Sigmoid colon (tissue), 7 donors: ENCODE measurements at regions of chr1 and their contacts with region 1.

Region 1: DNA sequence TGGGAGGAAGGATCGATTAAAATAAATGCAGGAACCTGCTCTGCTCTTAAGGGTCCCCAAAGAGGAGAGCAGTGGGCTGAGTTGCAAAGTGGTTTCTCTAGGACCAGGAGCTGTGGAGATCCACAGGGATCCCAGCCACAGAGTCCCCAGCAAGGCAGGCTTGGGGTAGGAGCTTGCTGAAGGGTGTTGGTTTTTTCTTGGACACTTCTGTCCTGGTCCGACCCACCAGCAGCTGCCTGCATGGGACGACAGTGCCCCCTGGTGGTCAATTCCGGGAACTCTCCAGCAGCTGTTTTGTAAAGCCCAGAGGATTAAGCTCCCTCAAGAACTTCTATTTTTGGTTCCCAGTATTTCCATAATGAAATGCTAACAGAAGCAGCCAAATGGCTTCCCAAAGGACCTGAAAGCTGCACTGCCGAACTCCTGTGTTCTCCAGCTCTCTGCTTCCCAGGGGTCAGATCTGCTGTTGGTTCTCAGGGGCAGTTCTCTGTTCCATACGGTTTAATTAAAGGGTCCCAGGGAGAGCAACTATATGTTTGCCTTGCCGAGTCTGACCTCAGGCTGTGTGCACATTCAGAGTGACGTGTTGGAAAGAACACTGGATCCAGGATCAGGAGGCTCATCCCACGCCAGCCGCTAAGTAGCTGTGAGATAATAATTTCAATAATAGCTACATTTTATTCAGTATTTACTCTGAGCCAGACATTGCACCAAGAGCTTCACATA is 23.2 kb downstream of the NENF start:
- DNase-seq: peak; percentile 92
- H3K4me3 ChIP-seq: no peak overlapping the region
- H3K27ac ChIP-seq: peak overlapping the region in 3 of 4 donors; percentile 35 to 73 (median 55)
- H3K4me1 ChIP-seq: peaks cover 0 to 21% (median 12%) of the 10 kb centered on the region in 4 donors
- H3K27me3 ChIP-seq: no peaks in the 10 kb centered on the region
- CTCF ChIP-seq: peak; percentile 84 to 99 (median 93)
- EP300 ChIP-seq: no peak
- POLR2A ChIP-seq: no peak

Region 2: GRCh38 chr1:211680752-211681327 is 775.1 kb before region 1 on chr1:
- intact Hi-C with region 1: loop called (anchors 2 kb)
- DNase-seq: peak; percentile 78
- H3K4me3 ChIP-seq: no peak overlapping the region
- H3K27ac ChIP-seq: no peak overlapping the region
- H3K4me1 ChIP-seq: peaks cover 0 to 3% (median 3%) of the 10 kb centered on the region in 4 donors
- H3K27me3 ChIP-seq: no peaks in the 10 kb centered on the region
- CTCF ChIP-seq: peak; percentile 55 to 70 (median 66)
- EP300 ChIP-seq: no peak
- POLR2A ChIP-seq: no peak

Region 3: DNA sequence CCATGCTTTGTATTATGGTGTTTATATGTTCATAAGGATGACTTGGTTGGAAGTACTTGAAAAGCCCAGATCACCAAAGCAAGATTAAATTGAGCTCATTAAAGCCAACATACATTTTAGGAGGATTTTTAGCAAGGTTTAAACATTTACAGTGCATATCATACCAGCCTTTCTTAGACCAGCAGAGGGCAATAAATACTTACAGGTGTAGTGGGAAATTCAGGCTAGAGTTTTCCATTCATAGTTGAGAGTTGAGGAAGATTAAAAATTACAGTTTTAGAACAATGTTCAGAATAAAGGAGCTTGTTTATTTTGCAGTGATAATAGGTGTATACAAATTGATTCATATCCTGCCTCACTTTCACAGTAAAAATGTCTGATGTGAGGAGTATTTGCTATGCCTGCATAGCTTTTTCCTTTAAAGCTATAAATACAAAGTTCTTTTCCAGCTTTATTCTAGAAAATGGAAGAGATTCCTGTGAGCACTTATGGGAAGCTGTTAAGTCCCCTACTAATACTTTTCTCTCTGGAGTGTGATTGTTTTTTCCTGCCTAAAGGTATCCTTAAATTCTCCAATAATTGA is 385.2 kb before region 1 on chr1:
- intact Hi-C with region 1: loop called (anchors 2 kb)
- DNase-seq: no peak
- H3K4me3 ChIP-seq: no peak overlapping the region
- H3K27ac ChIP-seq: no peak overlapping the region
- H3K4me1 ChIP-seq: no peaks in the 10 kb centered on the region
- H3K27me3 ChIP-seq: no peaks in the 10 kb centered on the region
- CTCF ChIP-seq: peak; percentile 61 to 79 (median 71)
- EP300 ChIP-seq: no peak
- POLR2A ChIP-seq: no peak

Region 4: GRCh38 chr1:212205843-212206242 is 250.1 kb before region 1 on chr1:
- intact Hi-C with region 1: no loop called
- DNase-seq: no peak
- H3K4me3 ChIP-seq: no peak overlapping the region
- H3K27ac ChIP-seq: no peak overlapping the region
- H3K4me1 ChIP-seq: no peaks in the 10 kb centered on the region
- H3K27me3 ChIP-seq: no peaks in the 10 kb centered on the region
- CTCF ChIP-seq: no peak
- EP300 ChIP-seq: no peak
- POLR2A ChIP-seq: no peak

Region 5: GRCh38 chr1:212368073-212368484 is 87.9 kb before region 1 on chr1:
- intact Hi-C with region 1: loop called (anchors 5 kb)
- DNase-seq: no peak
- H3K4me3 ChIP-seq: no peak overlapping the region
- H3K27ac ChIP-seq: no peak overlapping the region
- H3K4me1 ChIP-seq: peaks cover 0 to 3% (median 0%) of the 10 kb centered on the region in 4 donors
- H3K27me3 ChIP-seq: no peaks in the 10 kb centered on the region
- CTCF ChIP-seq: peak; percentile 57 to 85 (median 71)
- EP300 ChIP-seq: no peak
- POLR2A ChIP-seq: no peak

Region 6: GRCh38 chr1:212621951-212622305 is 166.0 kb after region 1 on chr1:
- intact Hi-C with region 1: no loop called
- DNase-seq: no peak
- H3K4me3 ChIP-seq: no peak overlapping the region
- H3K27ac ChIP-seq: no peak overlapping the region
- H3K4me1 ChIP-seq: no peaks in the 10 kb centered on the region
- H3K27me3 ChIP-seq: no peaks in the 10 kb centered on the region
- CTCF ChIP-seq: no peak
- EP300 ChIP-seq: no peak
- POLR2A ChIP-seq: no peak